Calu3 (cell line): ENCODE measurements at regions of chr7 and their contacts with region 1.

Region 1: DNA sequence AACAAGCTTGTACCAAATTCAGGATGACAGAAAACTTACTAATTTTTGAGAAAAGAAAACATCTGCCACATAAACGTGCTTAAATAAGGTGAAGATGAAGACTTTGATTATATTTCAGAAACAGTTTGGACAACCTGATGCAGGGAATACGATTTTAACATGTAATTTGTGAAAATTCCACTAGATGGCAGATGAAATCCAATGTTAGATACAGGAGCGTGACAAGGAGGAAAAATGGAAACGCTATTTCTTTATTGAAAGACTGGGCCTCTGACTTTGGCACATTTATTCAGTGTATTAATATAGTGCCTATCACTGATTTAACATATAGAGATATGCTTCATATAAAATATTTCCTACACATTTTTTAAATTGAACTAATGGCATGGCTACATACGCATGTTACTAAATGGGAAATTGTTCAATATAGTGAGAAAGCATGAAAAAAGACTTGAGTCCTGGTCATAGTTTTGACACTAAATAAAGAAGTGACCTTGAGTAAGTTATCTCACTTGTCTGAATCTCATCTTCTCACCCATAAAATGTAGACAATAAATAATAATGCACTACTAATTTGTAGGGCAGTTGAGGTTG is 60.7 kb downstream of the CD36 start:
- DNase-seq: no peak
- H3K4me3 Mint-ChIP-seq: no peak overlapping the region
- H3K27ac Mint-ChIP-seq: no peak overlapping the region
- H3K4me1 Mint-ChIP-seq: no peaks in the 10 kb centered on the region
- H3K27me3 Mint-ChIP-seq: no peaks in the 10 kb centered on the region
- CTCF ChIP-seq: no peak

Region 2: DNA sequence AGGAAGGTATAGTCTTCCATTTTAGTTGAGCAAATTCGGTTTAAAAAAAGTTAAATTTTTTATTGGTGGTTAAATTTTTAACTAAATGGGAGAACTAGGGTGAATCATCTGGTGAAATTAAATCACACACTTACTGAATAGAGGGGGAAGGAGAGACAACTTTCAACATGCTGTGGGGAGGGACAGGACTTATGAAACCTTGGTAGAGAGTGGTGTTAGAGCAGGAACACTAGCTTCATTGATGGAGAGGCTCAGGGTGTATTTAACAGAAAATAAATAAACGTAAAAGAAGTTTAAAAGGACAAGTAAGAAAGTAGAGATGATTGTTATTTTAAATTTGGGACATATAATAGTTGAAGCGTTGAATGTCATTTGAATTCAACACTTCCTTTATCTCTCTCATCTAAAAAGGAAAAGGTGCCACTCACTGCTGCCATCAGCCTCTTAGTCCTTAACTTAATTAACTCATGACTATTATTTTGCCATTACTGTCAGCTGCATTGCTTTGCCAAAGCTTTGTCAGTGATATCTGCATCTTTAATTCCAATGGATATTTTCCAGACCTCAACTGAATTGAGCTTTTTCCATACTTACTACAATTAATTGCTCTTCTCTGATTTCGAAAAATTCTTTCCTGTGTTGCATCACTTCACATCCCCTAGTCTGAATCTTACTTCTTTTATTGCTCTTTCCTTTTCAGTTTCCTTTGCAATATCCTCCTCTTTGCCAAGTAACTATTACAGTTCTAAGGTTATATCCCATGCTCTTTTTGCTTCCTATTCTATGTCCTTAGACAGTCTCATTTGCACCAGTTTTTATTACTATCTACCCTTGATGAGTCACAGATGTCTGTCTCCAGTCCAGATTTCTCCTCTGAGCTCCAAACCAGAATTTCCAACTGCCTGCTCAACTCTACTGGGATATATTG is 259.0 kb before region 1 on chr7:
- CTCF ChIA-PET with region 1: no interaction called
- intact Hi-C with region 1: no loop called
- DNase-seq: no peak
- H3K4me3 Mint-ChIP-seq: no peak overlapping the region
- H3K27ac Mint-ChIP-seq: no peak overlapping the region
- H3K4me1 Mint-ChIP-seq: peaks cover 14% of the 10 kb centered on the region
- H3K27me3 Mint-ChIP-seq: no peaks in the 10 kb centered on the region
- CTCF ChIP-seq: no peak

Region 3: GRCh38 chr7:80659120-80660055 is 39.8 kb before region 1 on chr7:
- CTCF ChIA-PET with region 1: no interaction called
- intact Hi-C with region 1: no loop called
- DNase-seq: no peak
- H3K4me3 Mint-ChIP-seq: no peak overlapping the region
- H3K27ac Mint-ChIP-seq: no peak overlapping the region
- H3K4me1 Mint-ChIP-seq: no peaks in the 10 kb centered on the region
- H3K27me3 Mint-ChIP-seq: no peaks in the 10 kb centered on the region
- CTCF ChIP-seq: no peak

Region 4: DNA sequence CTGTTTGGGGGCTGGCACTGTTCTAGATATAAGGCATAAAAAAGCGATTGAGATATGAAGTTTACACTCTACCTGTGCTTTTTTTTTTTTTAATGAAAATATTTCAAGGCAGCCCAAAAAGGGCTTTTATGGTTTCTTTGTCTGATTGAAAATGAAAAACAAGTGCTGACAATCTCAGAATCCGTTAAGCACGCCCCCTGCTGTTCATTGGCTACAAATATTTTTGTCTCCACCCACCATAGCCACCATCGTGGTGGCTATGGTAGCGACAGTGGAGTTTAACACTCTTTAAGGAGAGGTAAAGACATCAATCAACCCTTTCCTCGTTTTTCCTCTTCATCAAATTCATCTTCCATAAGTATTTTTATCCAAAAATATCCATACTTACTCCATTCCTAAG is 33.5 kb after region 1 on chr7:
- CTCF ChIA-PET with region 1: no interaction called
- intact Hi-C with region 1: loop called (anchors 1 kb)
- DNase-seq: peak; percentile 23
- H3K4me3 Mint-ChIP-seq: no peak overlapping the region
- H3K27ac Mint-ChIP-seq: no peak overlapping the region
- H3K4me1 Mint-ChIP-seq: no peaks in the 10 kb centered on the region
- H3K27me3 Mint-ChIP-seq: no peaks in the 10 kb centered on the region
- CTCF ChIP-seq: peak; percentile 25

Region 5: GRCh38 chr7:80934321-80934720 is 235.2 kb after region 1 on chr7:
- CTCF ChIA-PET with region 1: no interaction called
- intact Hi-C with region 1: no loop called
- DNase-seq: no peak
- H3K4me3 Mint-ChIP-seq: no peak overlapping the region
- H3K27ac Mint-ChIP-seq: no peak overlapping the region
- H3K4me1 Mint-ChIP-seq: peaks cover 18% of the 10 kb centered on the region
- H3K27me3 Mint-ChIP-seq: no peaks in the 10 kb centered on the region
- CTCF ChIP-seq: no peak

Region 6: DNA sequence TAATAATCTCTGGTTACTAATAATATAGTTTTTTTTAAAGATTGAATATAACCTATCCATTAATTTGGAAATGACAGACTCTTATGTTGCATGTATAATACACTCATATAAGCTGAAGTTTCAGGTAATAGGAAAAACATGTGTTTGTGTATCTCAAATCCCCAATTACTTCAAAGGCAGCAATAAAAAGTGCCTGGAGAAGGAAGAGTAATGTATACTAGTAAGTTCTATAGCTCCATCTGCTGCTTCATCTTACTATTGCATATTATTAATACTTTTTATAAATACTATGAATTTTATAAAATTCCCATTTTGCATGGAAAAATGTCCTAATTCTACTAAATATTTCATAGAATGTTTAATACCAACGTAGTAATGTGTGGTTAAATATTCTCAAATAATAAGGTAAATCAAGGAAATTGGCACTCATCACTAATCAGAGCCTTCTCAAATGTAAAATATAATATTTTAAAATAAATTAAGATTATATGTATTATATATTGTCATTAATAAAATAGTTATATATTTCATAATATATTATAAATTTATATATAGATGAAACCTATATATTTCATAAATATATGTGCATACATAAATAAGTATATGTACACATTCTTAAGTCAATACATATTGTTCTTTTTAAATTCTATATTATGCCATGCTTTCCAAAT is 758.8 kb after region 1 on chr7:
- CTCF ChIA-PET with region 1: no interaction called
- intact Hi-C with region 1: loop called (anchors 5 kb)
- DNase-seq: no peak
- H3K4me3 Mint-ChIP-seq: no peak overlapping the region
- H3K27ac Mint-ChIP-seq: no peak overlapping the region
- H3K4me1 Mint-ChIP-seq: no peaks in the 10 kb centered on the region
- H3K27me3 Mint-ChIP-seq: no peaks in the 10 kb centered on the region
- CTCF ChIP-seq: no peak

Region 7: GRCh38 chr7:81469869-81470723 is 771.0 kb after region 1 on chr7:
- CTCF ChIA-PET with region 1: interaction called, 5 read pairs
- intact Hi-C with region 1: loop called (anchors 5 kb)
- DNase-seq: peak; percentile 66
- H3K4me3 Mint-ChIP-seq: no peak overlapping the region
- H3K27ac Mint-ChIP-seq: no peak overlapping the region
- H3K4me1 Mint-ChIP-seq: peaks cover 17% of the 10 kb centered on the region
- H3K27me3 Mint-ChIP-seq: no peaks in the 10 kb centered on the region
- CTCF ChIP-seq: peak; percentile 44